ENCODE measurements at regions of chr6 and their contacts with region 1.

Region 1: GRCh38 chr6:16183187-16183664 is 54.3 kb downstream of the MYLIP start:
- DNase-seq: no peak
- H3K4me3 ChIP-seq: no peak overlapping the region
- H3K27ac ChIP-seq: no peak overlapping the region
- H3K4me1 ChIP-seq: peaks cover 0 to 5% (median 0%) of the 10 kb centered on the region in 4 experiments; a peak in 2 of 7 replicates
- H3K27me3 ChIP-seq: no peaks in the 10 kb centered on the region
- CTCF ChIP-seq: peak in 2 of 3 experiments; percentile 46 to 60; a peak in 2 of 4 replicates
- EP300 ChIP-seq: no peak
- POLR2A ChIP-seq: no peak
- RAD21 ChIP-seq: peak; percentile 66 to 70

Region 2: GRCh38 chr6:15685619-15686018 is 497.6 kb before region 1 on chr6:
- CTCF ChIA-PET with region 1: interaction called, 17 read pairs
- POLR2A ChIA-PET with region 1: no interaction called
- DNase-seq: no peak
- H3K4me3 ChIP-seq: no peak overlapping the region
- H3K27ac ChIP-seq: no peak overlapping the region
- H3K4me1 ChIP-seq: no peaks in the 10 kb centered on the region
- H3K27me3 ChIP-seq: no peaks in the 10 kb centered on the region
- CTCF ChIP-seq: no peak
- EP300 ChIP-seq: no peak
- POLR2A ChIP-seq: no peak
- RAD21 ChIP-seq: no peak

Region 3: DNA sequence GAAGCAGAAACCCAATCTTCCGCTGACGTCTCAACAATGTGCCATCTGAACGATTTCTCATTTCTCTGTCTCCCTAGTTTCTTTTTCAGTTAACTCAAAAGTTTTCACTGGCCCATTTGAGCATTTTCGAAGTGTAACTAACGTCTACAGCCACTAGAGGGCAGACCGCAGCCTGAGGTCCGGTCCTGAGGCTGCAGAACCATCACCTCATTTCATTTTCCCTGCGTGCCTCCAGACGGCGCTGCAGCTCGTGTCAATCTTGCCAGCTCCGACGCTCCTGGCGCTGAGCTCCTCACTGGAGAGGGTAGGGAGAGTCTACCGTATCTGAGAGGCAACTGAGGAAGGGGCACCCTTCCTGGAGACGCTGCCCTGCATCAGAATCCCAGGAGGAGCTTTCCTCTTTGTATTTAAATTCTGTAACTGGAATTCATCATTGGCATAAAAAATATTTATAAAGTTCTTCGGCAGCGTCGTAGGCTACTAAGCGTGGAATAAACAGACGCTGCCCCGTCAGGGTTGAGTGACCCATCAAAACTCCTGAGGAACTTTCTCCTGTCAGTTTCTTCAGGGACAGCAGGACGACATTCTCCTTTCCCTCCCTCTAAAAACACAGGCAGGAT is 491.9 kb before region 1 on chr6:
- CTCF ChIA-PET with region 1: interaction called, 34 read pairs
- POLR2A ChIA-PET with region 1: no interaction called
- DNase-seq: peak; percentile 75 to 79
- H3K4me3 ChIP-seq: no peak overlapping the region
- H3K27ac ChIP-seq: no peak overlapping the region
- H3K4me1 ChIP-seq: no peaks in the 10 kb centered on the region
- H3K27me3 ChIP-seq: no peaks in the 10 kb centered on the region
- CTCF ChIP-seq: peak; percentile 100
- EP300 ChIP-seq: no peak
- POLR2A ChIP-seq: no peak
- RAD21 ChIP-seq: peak; percentile 100

Region 4: GRCh38 chr6:16154904-16155303 is 28.3 kb before region 1 on chr6:
- CTCF ChIA-PET with region 1: interaction called, 21 read pairs
- POLR2A ChIA-PET with region 1: no interaction called
- DNase-seq: no peak
- H3K4me3 ChIP-seq: no peak overlapping the region
- H3K27ac ChIP-seq: no peak overlapping the region
- H3K4me1 ChIP-seq: no peaks in the 10 kb centered on the region
- H3K27me3 ChIP-seq: no peaks in the 10 kb centered on the region
- CTCF ChIP-seq: no peak
- EP300 ChIP-seq: no peak
- POLR2A ChIP-seq: no peak
- RAD21 ChIP-seq: no peak

Region 5: GRCh38 chr6:16168858-16169257 is 14.4 kb before region 1 on chr6:
- CTCF ChIA-PET with region 1: interaction called, 13 read pairs
- POLR2A ChIA-PET with region 1: no interaction called
- DNase-seq: no peak
- H3K4me3 ChIP-seq: no peak overlapping the region
- H3K27ac ChIP-seq: no peak overlapping the region
- H3K4me1 ChIP-seq: no peaks in the 10 kb centered on the region
- H3K27me3 ChIP-seq: no peaks in the 10 kb centered on the region; a peak in 1 of 7 replicates
- CTCF ChIP-seq: peak in 2 of 3 experiments; percentile 67 to 72; a peak in 3 of 4 replicates
- EP300 ChIP-seq: no peak
- POLR2A ChIP-seq: no peak
- RAD21 ChIP-seq: peak; percentile 82 to 88

Region 6: GRCh38 chr6:16200321-16200883 is 17.2 kb after region 1 on chr6:
- CTCF ChIA-PET with region 1: interaction called, 19 read pairs
- POLR2A ChIA-PET with region 1: no interaction called
- DNase-seq: no peak
- H3K4me3 ChIP-seq: no peak overlapping the region
- H3K27ac ChIP-seq: no peak overlapping the region
- H3K4me1 ChIP-seq: no peaks in the 10 kb centered on the region
- H3K27me3 ChIP-seq: no peaks in the 10 kb centered on the region
- CTCF ChIP-seq: no peak
- EP300 ChIP-seq: no peak
- POLR2A ChIP-seq: no peak
- RAD21 ChIP-seq: no peak

Region 7: GRCh38 chr6:16355699-16356446 is 172.6 kb after region 1 on chr6:
- CTCF ChIA-PET with region 1: no interaction called
- POLR2A ChIA-PET with region 1: no interaction called
- DNase-seq: no peak
- H3K4me3 ChIP-seq: no peak overlapping the region
- H3K27ac ChIP-seq: no peak overlapping the region
- H3K4me1 ChIP-seq: peaks cover 0 to 4% (median 1%) of the 10 kb centered on the region in 4 experiments; a peak in 2 of 7 replicates
- H3K27me3 ChIP-seq: no peaks in the 10 kb centered on the region
- CTCF ChIP-seq: peak in 2 of 3 experiments; percentile 4 to 11; a peak in 1 of 4 replicates
- EP300 ChIP-seq: no peak
- POLR2A ChIP-seq: no peak
- RAD21 ChIP-seq: peak in 1 of 2 experiments; percentile 12; a peak in 1 of 4 replicates

Region 8: GRCh38 chr6:17877196-17877889 is 1694.1 kb after region 1 on chr6:
- CTCF ChIA-PET with region 1: no interaction called
- POLR2A ChIA-PET with region 1: no interaction called
- DNase-seq: no peak
- H3K4me3 ChIP-seq: no peak overlapping the region
- H3K27ac ChIP-seq: no peak overlapping the region
- H3K4me1 ChIP-seq: peaks cover 0 to 2% (median 0%) of the 10 kb centered on the region in 4 experiments; a peak in 1 of 7 replicates
- H3K27me3 ChIP-seq: no peaks in the 10 kb centered on the region
- CTCF ChIP-seq: no peak
- EP300 ChIP-seq: no peak
- POLR2A ChIP-seq: no peak
- RAD21 ChIP-seq: no peak